ENCODE measurements at regions of chr3 and their contacts with region 1.

Region 1: DNA sequence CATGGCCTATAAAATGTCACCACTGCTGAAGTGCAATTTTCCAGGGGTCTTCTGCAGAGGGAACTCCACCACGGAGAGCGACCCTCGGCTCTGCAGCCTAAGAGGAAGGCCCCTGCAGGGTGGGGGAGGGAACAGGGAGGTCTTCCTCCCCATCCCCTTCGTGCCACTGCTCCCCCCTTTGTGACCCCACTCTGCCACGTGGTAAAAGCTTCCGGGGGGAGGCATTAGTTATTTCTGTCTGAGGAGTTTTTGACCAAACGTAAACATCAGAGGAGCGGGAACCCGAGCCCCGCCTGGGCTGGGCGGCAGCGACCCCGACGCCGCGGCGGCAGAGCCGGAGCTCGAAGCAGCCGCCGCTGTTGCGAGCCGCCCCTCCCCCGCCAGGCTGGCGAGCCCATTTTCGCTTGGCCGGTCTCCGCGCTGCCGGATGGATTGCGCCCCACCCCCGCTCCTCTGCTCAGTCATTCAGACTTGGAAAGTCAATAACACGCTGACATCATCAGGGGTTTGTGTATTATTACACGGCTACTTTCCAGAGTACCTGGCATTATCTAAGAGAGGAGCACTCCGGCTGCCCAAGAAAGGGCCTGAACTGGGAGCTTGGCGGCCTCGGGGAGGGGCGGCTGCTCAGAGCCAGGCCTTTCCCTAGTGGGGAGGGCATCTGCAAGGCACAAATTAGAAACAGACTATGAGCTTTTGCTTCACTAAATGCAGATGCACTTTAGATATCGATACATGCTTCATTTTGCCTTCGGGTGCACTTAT is 162.5 kb upstream of the TBL1XR1 start:
- DNase-seq: peak; percentile 99
- ATAC-seq: peak; percentile 59
- H3K4me3 ChIP-seq: peak overlapping the region; percentile 53
- H3K27ac ChIP-seq: peak overlapping the region; percentile 95
- H3K4me1 ChIP-seq: peaks cover 45% of the 10 kb centered on the region
- H3K27me3 ChIP-seq: no peaks in the 10 kb centered on the region
- CTCF ChIP-seq: no peak

Region 2: DNA sequence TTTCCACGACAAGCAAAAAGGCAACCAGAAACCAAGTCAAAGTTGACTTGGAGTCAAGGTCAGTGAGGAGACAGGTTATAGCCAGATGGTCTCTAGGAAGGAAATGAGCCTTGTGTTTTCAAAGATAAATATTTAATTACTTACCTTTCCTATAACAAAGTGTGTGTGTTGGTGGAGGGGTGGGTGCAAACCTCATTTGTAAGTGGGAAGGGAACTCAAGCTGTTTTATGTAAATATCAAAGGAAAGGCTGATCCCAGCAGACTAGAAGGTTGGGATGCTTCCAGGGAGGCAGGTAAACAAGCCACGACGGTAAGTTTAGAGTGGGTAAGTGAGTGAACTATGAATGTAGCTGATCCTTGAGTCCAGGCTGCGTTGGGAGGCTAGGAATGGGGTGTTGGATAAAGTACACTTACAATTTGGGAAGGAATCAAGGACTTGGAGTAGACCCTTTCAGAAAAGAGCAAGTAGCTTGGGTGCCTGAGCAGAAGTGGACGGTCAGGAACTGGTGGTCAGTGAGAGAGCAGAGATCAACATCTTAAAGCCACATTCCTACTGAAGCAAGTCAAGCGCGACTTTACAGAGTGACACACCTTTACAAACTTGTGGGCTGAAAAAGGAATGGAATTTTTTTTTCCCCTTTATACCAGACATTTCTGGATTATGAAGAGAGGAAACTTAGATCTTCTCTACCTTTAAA is 80.5 kb before region 1 on chr3:
- CTCF ChIA-PET with region 1: no interaction called
- POLR2A ChIA-PET with region 1: no interaction called
- intact Hi-C with region 1: loop called (anchors 2 kb)
- DNase-seq: peak; percentile 59
- ATAC-seq: peak; percentile 90
- H3K4me3 ChIP-seq: no peak overlapping the region
- H3K27ac ChIP-seq: no peak overlapping the region
- H3K4me1 ChIP-seq: peaks cover 9% of the 10 kb centered on the region
- H3K27me3 ChIP-seq: no peaks in the 10 kb centered on the region
- CTCF ChIP-seq: no peak

Region 3: GRCh38 chr3:177426878-177427495 is 67.2 kb after region 1 on chr3:
- CTCF ChIA-PET with region 1: no interaction called
- POLR2A ChIA-PET with region 1: no interaction called
- intact Hi-C with region 1: no loop called
- DNase-seq: no peak
- ATAC-seq: no peak
- H3K4me3 ChIP-seq: no peak overlapping the region
- H3K27ac ChIP-seq: no peak overlapping the region
- H3K4me1 ChIP-seq: peaks cover 8% of the 10 kb centered on the region
- H3K27me3 ChIP-seq: no peaks in the 10 kb centered on the region
- CTCF ChIP-seq: no peak

Region 4: DNA sequence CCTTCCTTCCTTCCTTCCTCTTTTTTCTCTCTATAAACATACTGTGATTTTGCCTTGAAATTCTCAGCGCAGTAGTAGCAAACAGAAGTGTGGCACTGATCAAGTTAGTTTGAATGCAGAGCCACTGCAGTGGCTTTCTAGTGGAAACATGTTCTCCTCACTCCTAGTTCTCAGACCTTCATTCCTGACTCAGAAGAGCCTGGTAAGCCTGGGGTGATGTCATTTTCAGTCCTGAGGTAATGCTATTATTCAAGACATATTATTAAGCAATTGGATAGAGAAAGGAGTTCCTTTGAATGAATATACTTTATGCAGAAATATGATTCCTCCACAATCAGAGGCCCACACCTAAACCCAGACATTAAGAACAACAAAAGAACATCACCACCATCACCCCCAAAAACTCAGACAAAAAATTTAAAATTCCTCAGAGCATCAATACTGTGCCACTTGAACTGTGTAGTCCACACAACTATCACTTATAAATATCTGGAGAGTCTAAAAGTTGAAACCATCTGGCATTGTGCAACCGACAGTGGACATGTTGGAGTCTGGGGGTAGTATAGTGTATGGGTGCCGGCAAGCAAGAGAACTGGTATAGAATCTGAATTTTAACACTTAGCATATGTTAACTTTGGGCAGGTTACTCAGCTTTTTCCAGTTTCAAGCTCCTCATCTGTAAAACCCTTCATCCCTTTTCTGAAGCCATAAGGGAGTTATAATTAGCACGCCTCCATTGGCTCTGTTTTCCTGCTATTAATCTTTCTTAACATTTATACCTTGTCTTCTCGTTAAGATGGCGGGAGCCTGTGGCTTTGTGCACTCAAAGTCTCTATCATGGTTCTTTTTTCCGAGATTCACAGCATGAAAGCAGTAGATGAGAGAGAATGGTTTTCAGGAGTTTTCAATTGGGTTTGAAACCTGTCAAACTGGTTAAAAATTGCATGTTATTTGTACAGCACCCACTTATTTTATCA is 93.0 kb after region 1 on chr3:
- CTCF ChIA-PET with region 1: no interaction called
- POLR2A ChIA-PET with region 1: no interaction called
- intact Hi-C with region 1: no loop called
- DNase-seq: peak; percentile 25
- ATAC-seq: peak; percentile 50; the same call in 1 of the 2 replicates
- H3K4me3 ChIP-seq: no peak overlapping the region
- H3K27ac ChIP-seq: no peak overlapping the region
- H3K4me1 ChIP-seq: no peaks in the 10 kb centered on the region
- H3K27me3 ChIP-seq: no peaks in the 10 kb centered on the region
- CTCF ChIP-seq: no peak

Region 5: DNA sequence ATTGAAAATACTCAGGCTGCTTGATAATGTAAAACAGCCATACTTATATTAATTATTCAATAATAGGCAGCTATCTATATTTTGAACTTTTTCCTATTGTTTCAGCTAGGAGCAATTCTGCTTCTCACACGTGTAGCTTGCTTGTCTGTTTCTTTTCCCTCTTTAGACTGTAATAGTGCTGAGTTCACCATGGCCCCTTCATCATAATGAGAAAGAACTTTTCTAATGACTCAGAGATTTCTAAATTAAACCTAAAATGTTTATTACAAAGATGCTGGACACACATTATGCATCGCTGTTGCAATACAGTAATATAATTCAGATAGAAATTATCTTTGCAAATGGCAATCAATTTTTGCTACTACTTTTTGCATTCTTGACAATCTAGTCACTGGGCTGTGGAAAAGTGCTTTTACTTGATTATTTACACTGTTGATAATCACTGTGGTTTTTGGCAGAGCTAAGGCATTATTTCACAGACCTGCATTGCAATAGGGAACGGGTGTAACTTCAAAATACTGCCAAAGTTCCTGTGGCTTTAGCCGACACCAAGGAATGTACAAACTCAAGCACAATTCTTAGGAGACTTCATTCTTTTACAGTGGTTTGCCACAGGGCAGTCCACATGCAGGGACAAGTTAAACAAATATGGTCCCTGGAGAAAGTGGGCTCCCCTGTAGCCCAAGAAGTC is 118.5 kb after region 1 on chr3:
- CTCF ChIA-PET with region 1: no interaction called
- POLR2A ChIA-PET with region 1: no interaction called
- intact Hi-C with region 1: loop called (anchors 1 kb)
- DNase-seq: peak; percentile 98
- ATAC-seq: peak; percentile 92
- H3K4me3 ChIP-seq: peak overlapping the region; percentile 24; the same call in 1 of the 2 replicates
- H3K27ac ChIP-seq: peak overlapping the region; percentile 84
- H3K4me1 ChIP-seq: peaks cover 26% of the 10 kb centered on the region
- H3K27me3 ChIP-seq: no peaks in the 10 kb centered on the region
- CTCF ChIP-seq: no peak

Region 6: GRCh38 chr3:177777699-177778098 is 417.9 kb after region 1 on chr3:
- CTCF ChIA-PET with region 1: no interaction called
- POLR2A ChIA-PET with region 1: no interaction called
- intact Hi-C with region 1: loop called (anchors 5 kb)
- DNase-seq: peak; percentile 67
- ATAC-seq: peak; percentile 67
- H3K4me3 ChIP-seq: no peak overlapping the region
- H3K27ac ChIP-seq: no peak overlapping the region
- H3K4me1 ChIP-seq: peaks cover 20% of the 10 kb centered on the region
- H3K27me3 ChIP-seq: no peaks in the 10 kb centered on the region
- CTCF ChIP-seq: peak; percentile 73

Region 7: DNA sequence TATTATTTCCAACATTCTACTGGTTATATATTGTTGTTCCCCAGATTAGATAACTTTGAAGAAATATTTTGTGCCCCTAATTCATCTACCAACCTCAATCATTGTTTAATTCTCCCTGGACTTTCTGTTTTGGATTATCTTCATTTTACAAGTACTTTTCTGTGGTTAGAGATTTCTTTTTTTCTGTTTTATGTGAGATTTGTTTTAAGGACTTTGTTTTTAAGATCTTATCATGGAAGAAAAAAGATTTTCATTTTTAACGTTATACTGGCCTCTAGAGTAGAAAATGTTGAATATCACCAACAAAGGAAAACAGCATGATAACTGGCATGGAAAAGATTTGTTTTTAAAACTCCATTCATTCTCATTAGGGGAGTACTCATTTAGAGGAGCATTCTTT is 965.6 kb after region 1 on chr3:
- CTCF ChIA-PET with region 1: interaction called, 3 read pairs
- POLR2A ChIA-PET with region 1: no interaction called
- intact Hi-C with region 1: loop called (anchors 2 kb)
- DNase-seq: peak; percentile 61
- ATAC-seq: peak; percentile 42; the same call in 1 of the 2 replicates
- H3K4me3 ChIP-seq: no peak overlapping the region
- H3K27ac ChIP-seq: no peak overlapping the region
- H3K4me1 ChIP-seq: no peaks in the 10 kb centered on the region
- H3K27me3 ChIP-seq: no peaks in the 10 kb centered on the region
- CTCF ChIP-seq: peak; percentile 73

Measured in PC-3 (cell line).